Left cardiac atrium (tissue), 4 donors: ENCODE measurements at regions of chr3 and their contacts with region 1.

Region 1: DNA sequence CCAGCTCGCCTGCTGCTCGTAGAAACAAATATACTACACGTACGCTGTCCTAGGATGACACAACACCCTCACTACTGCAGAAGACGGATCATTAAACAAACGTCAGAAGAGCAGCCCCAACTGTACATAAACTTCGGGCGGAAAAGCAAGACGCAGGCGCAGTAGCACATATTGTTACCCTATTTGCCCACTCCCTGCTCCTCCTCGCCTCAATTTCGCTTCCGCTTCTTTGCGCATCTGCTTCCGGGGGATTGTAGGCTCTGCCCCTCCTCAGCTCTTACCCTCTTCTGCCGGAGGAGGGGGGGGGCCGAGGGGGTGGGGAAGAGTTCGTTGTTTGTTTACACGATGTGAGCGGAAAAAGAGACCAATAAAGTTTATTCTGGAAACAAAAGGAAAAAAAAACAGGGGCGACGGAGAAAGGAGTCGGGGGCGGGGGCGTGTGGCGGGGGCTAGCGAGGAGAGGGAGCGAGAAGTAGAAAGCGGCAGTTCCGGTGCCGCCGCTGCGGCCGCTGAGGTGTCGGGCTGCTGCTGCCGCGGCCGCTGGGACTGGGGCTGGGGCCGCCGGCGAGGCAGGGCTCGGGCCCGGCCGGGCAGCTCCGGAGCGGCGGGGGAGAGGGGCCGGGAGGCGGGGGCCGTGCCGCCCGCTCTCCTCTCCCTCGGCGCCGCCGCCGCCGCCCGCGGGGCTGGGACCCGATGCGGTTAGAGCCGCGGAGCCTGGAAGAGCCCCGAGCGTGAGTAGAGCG is at the start of gene PIK3CA:
- DNase-seq: peak; percentile 95
- ATAC-seq: peak; percentile 97
- total RNA-seq, gene PIK3CA: 22.0 to 23.1 TPM

Region 2: DNA sequence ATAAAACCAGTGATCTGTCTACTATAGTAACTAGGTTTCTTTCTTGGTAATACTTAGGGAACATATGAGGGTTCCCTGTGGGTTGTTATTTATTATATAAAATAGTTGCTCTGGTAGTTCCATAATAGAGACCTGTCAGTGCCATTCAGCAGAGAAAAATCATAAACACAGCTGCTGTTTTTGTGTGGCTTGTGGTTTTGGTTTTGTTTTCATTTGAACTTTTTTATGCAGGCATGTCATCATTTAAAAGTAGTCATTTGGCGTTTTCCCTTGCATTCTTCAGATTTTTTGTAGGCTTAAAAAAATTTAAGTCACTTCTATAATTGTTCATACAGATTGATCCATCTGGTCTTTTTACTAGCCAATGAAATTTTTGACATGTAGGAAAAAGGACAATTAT is 48.1 kb after region 1 on chr3:
- intact Hi-C with region 1: loop called in 1 of 2 experiments (anchors 5 kb)
- DNase-seq: no peak
- ATAC-seq: no peak

Region 3: GRCh38 chr3:179260949-179261765 is 113.1 kb after region 1 on chr3:
- intact Hi-C with region 1: loop called in 1 of 2 experiments (anchors 5 kb)
- DNase-seq: peak; percentile 87
- ATAC-seq: peak; percentile 99 to 100

Region 4: GRCh38 chr3:179309225-179310078 is 161.4 kb after region 1 on chr3:
- intact Hi-C with region 1: loop called in 1 of 2 experiments (anchors 10 kb)
- DNase-seq: no peak
- ATAC-seq: no peak

Region 5: GRCh38 chr3:179322286-179323196 is 174.5 kb after region 1 on chr3 and contains the start of gene ZNF639:
- intact Hi-C with region 1: loop called (anchors 5 to 10 kb)
- DNase-seq: peak; percentile 87
- ATAC-seq: peak; percentile 90 to 92
- total RNA-seq, gene ZNF639: 23.5 to 39.4 TPM